Naive thymus-derived CD4-positive, alpha-beta T cell (primary cell): ENCODE measurements at regions of chr9 and their contacts with region 1.

Region 1: DNA sequence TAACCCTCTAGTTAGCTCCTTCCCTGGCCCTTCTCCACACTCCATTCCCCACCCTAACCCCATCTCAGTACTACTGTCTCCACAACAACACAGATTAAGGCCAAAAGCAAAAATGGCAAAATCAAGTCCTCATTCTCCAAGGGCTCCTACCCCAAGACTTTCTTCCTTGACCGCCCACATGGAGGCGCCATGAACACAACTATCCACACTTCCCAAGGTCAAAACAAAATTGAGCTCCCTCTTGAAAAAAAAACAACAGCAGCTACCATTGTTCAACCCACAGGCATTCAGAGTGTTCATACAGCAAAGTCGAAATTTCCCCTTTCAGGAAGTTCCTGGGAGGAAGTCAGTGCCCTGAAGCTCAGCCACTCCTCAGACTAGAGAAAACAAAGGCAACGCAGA is 54.4 kb downstream of the GNAQ start:
- DNase-seq: peak; percentile 12 to 58 (median 47)
- ATAC-seq: peak; percentile 78
- H3K4me3 ChIP-seq: peak overlapping the region; percentile 2
- H3K4me3 Mint-ChIP-seq: peak overlapping the region in 9 of 10 donors; percentile 29 to 77 (median 60)
- H3K27ac ChIP-seq: peak overlapping the region; percentile 20
- H3K27ac Mint-ChIP-seq: peak overlapping the region; percentile 57 to 87 (median 78)
- H3K4me1 ChIP-seq: peaks cover 23 to 45% of the 10 kb centered on the region in 2 donors
- H3K4me1 Mint-ChIP-seq: peaks cover 41 to 76% (median 62%) of the 10 kb centered on the region in 7 donors
- H3K27me3 ChIP-seq: no peaks in the 10 kb centered on the region
- H3K27me3 Mint-ChIP-seq: no peaks in the 10 kb centered on the region

Region 2: DNA sequence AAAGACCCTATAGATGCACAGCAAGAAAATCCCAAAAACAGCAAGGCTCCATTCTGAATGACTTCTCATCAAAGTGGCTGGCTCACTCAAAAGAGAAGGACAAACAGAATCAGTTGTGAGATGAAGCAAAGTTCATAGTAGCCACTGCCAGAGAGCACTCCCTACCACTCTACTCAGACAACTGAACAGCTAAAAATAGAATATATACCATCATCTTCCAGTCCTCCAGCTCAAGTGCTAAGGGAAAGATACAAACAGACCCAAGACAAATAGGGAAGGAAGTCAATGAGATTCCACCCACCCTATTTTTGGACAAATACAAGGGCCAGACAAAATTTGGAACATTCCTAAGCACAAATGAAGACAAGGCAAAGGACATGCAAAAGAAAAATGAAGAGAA is 33.8 kb after region 1 on chr9:
- CTCF ChIA-PET with region 1: no interaction called
- POLR2A ChIA-PET with region 1: no interaction called
- intact Hi-C with region 1: no loop called
- DNase-seq: no peak
- ATAC-seq: no peak
- H3K4me3 ChIP-seq: no peak overlapping the region
- H3K4me3 Mint-ChIP-seq: peak overlapping the region in 8 of 10 donors; percentile 59 to 72 (median 63)
- H3K27ac ChIP-seq: no peak overlapping the region
- H3K27ac Mint-ChIP-seq: peak overlapping the region in 8 of 9 donors; percentile 38 to 84 (median 57)
- H3K4me1 ChIP-seq: peaks cover 13 to 28% of the 10 kb centered on the region in 2 donors
- H3K4me1 Mint-ChIP-seq: peaks cover 48 to 79% (median 63%) of the 10 kb centered on the region in 7 donors
- H3K27me3 ChIP-seq: no peaks in the 10 kb centered on the region
- H3K27me3 Mint-ChIP-seq: no peaks in the 10 kb centered on the region

Region 3: GRCh38 chr9:78053627-78054026 is 76.4 kb after region 1 on chr9:
- CTCF ChIA-PET with region 1: interaction called, 10 read pairs
- POLR2A ChIA-PET with region 1: no interaction called
- intact Hi-C with region 1: no loop called
- DNase-seq: no peak
- ATAC-seq: peak; percentile 31
- H3K4me3 ChIP-seq: no peak overlapping the region
- H3K4me3 Mint-ChIP-seq: peak overlapping the region in 7 of 10 donors; percentile 19 to 69 (median 47)
- H3K27ac ChIP-seq: no peak overlapping the region
- H3K27ac Mint-ChIP-seq: peak overlapping the region in 2 of 9 donors; percentile 7 to 48
- H3K4me1 ChIP-seq: peaks cover 14 to 16% of the 10 kb centered on the region in 2 donors
- H3K4me1 Mint-ChIP-seq: peaks cover 15 to 41% (median 25%) of the 10 kb centered on the region in 7 donors
- H3K27me3 ChIP-seq: no peaks in the 10 kb centered on the region
- H3K27me3 Mint-ChIP-seq: peaks cover 0 to 42% (median 0%) of the 10 kb centered on the region in 5 donors

Region 4: DNA sequence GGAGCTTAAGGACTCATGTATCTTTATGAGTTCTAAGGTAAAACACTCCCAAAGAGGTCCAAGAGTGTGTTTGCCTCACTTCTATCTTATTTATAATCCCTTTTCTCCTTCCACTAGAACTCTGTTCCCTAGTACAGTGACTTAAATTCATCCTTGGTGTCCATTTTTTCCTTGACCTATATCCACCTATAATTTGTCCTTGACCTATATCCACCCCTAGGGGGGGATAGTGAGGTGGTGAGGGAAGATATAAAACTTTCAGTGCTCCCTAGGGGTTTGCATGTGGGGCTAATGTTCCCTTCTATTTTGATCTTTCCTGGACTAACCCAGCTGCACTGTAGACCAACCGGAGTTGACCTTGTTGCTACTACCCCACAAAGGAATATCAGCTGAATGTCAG is 137.9 kb after region 1 on chr9:
- CTCF ChIA-PET with region 1: interaction called, 40 read pairs
- POLR2A ChIA-PET with region 1: interaction called, 3 read pairs
- intact Hi-C with region 1: no loop called
- DNase-seq: peak in 2 of 9 donors; percentile 11 to 18
- ATAC-seq: peak; percentile 43
- H3K4me3 ChIP-seq: no peak overlapping the region
- H3K4me3 Mint-ChIP-seq: no peak overlapping the region
- H3K27ac ChIP-seq: no peak overlapping the region
- H3K27ac Mint-ChIP-seq: no peak overlapping the region
- H3K4me1 ChIP-seq: peaks cover 17 to 21% of the 10 kb centered on the region in 2 donors
- H3K4me1 Mint-ChIP-seq: peaks cover 33 to 63% (median 41%) of the 10 kb centered on the region in 7 donors
- H3K27me3 ChIP-seq: no peaks in the 10 kb centered on the region
- H3K27me3 Mint-ChIP-seq: no peaks in the 10 kb centered on the region

Region 5: GRCh38 chr9:78369639-78370219 is 392.5 kb after region 1 on chr9:
- CTCF ChIA-PET with region 1: no interaction called
- POLR2A ChIA-PET with region 1: no interaction called
- intact Hi-C with region 1: loop called in 1 of 2 experiments (anchors 5 kb)
- DNase-seq: peak in 8 of 9 donors; percentile 17 to 54 (median 40)
- ATAC-seq: peak; percentile 47
- H3K4me3 ChIP-seq: no peak overlapping the region
- H3K4me3 Mint-ChIP-seq: no peak overlapping the region
- H3K27ac ChIP-seq: no peak overlapping the region
- H3K27ac Mint-ChIP-seq: no peak overlapping the region
- H3K4me1 ChIP-seq: no peaks in the 10 kb centered on the region
- H3K4me1 Mint-ChIP-seq: peaks cover 0 to 3% (median 0%) of the 10 kb centered on the region in 7 donors
- H3K27me3 ChIP-seq: no peaks in the 10 kb centered on the region
- H3K27me3 Mint-ChIP-seq: peaks cover 27 to 37% (median 29%) of the 10 kb centered on the region in 5 donors